Heart left ventricle (tissue), 16 donors: ENCODE measurements at regions of chr19 and their contacts with region 1.

Region 1: DNA sequence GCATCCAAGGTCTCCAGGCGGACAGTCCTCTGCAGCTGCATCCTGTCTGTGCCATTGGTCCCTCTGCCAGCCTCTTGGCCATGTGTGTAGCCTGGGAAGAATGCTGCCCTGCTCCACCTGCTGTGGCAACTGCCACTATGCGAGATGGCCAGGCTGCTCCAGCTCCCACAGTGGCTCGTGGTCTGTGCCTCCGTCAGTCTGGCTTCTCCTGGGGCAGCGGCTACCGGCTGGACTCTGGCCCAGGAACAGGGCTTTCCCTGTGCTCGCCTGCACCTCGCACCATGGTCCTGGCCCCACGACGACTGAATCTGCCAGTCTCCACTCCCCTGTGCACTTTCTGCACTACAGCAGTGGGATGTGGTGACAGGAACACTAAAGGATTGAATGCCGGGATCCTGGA is 26.7 kb upstream of the FFAR2 start:
- DNase-seq: no peak
- ATAC-seq: peak in 1 of 4 donors; percentile 18
- H3K4me3 ChIP-seq: no peak overlapping the region
- H3K27ac ChIP-seq: no peak overlapping the region
- H3K4me1 ChIP-seq: peaks cover 0 to 16% (median 0%) of the 10 kb centered on the region in 12 donors
- H3K27me3 ChIP-seq: peaks cover 0 to 3% (median 0%) of the 10 kb centered on the region in 9 donors
- CTCF ChIP-seq: no peak
- POLR2A ChIP-seq: no peak

Region 2: GRCh38 chr19:35468637-35469036 is 47.3 kb after region 1 on chr19:
- intact Hi-C with region 1: loop called in 1 of 10 experiments (anchors 5 kb)
- DNase-seq: peak in 4 of 5 donors; percentile 50 to 73 (median 56)
- ATAC-seq: peak; percentile 88 to 92 (median 90)
- H3K4me3 ChIP-seq: no peak overlapping the region
- H3K27ac ChIP-seq: no peak overlapping the region
- H3K4me1 ChIP-seq: peaks cover 0 to 9% (median 0%) of the 10 kb centered on the region in 12 donors
- H3K27me3 ChIP-seq: no peaks in the 10 kb centered on the region
- CTCF ChIP-seq: peak; percentile 55 to 72 (median 60)
- POLR2A ChIP-seq: no peak

Region 3: DNA sequence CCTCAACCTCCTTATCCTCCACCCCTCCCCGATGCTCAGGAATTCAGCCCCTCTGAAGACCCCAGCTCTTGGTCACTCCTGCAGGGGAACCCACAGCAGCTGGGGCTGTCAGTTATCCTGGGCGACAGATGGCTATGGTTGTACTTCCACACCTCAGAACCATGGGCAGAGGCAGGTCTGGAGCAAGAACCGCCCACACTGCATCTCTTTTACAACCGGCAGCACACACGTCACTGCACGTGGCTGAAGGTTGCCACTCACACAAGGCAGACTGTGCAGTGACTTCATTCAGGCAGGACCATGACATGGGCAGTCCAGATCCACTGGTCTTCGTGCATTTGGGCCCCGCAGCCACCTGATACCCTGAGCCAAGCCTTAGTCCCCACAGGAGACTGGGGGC is 552.1 kb after region 1 on chr19:
- intact Hi-C with region 1: no loop called
- DNase-seq: peak in 1 of 5 donors; percentile 19
- ATAC-seq: no peak
- H3K4me3 ChIP-seq: no peak overlapping the region
- H3K27ac ChIP-seq: no peak overlapping the region
- H3K4me1 ChIP-seq: no peaks in the 10 kb centered on the region
- H3K27me3 ChIP-seq: peaks cover 0 to 9% (median 0%) of the 10 kb centered on the region in 9 donors
- CTCF ChIP-seq: no peak
- POLR2A ChIP-seq: no peak